Spleen (tissue), 13 donors: ENCODE measurements at regions of chr15 and their contacts with region 1.

Region 1: DNA sequence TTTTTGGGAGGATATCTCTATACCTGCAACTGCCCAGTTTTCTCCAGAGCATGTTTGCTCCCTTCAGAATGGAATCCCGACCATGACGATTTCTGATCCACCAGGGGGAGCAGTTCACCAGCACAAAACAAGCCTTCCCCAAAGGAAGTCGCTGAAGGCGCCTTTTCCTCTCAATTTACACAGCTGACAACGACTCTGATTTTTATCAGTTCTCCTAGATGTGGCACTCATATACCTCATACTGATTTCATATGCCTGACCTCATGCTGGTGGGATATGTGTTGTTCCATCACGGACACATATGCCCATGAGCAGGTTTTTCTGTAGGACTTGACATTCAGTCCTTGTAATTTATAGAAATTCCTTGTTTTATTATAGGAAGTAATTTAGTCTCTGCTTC is 1028.2 kb downstream of the MCTP2 start:
- DNase-seq: no peak
- H3K4me3 ChIP-seq: no peak overlapping the region
- H3K27ac ChIP-seq: peak overlapping the region in 7 of 8 donors; percentile 59 to 83 (median 71)
- H3K4me1 ChIP-seq: peaks cover 0 to 35% (median 27%) of the 10 kb centered on the region in 6 donors
- H3K27me3 ChIP-seq: peaks cover 0 to 21% (median 0%) of the 10 kb centered on the region in 7 donors
- CTCF ChIP-seq: peak; percentile 45 to 79 (median 68)
- POLR2A ChIP-seq: no peak

Region 2: DNA sequence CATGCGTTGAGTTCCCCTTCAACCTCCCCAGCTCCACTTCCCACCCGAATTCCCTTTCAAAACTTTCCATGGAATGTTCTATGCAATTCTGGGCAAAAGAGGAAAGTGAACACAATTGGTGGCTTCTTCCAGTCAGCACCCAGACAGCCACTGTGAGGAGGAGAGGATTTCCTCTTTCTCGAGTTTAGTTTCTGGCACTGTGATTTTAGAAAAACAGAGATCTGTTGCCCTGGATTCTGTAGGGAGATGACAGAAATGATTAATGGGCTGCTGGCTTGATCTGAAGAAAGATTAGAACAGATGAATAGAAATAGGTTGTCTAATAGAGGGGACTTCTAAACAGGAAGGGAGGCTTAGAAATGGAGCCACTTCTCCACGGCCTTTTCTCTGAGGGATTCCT is 856.2 kb before region 1 on chr15:
- intact Hi-C with region 1: loop called (anchors 10 kb)
- DNase-seq: no peak
- H3K4me3 ChIP-seq: no peak overlapping the region
- H3K27ac ChIP-seq: peak overlapping the region in 7 of 8 donors; percentile 0 to 81 (median 75)
- H3K4me1 ChIP-seq: peaks cover 0 to 51% (median 27%) of the 10 kb centered on the region in 6 donors
- H3K27me3 ChIP-seq: no peaks in the 10 kb centered on the region
- CTCF ChIP-seq: no peak
- POLR2A ChIP-seq: no peak

Region 3: DNA sequence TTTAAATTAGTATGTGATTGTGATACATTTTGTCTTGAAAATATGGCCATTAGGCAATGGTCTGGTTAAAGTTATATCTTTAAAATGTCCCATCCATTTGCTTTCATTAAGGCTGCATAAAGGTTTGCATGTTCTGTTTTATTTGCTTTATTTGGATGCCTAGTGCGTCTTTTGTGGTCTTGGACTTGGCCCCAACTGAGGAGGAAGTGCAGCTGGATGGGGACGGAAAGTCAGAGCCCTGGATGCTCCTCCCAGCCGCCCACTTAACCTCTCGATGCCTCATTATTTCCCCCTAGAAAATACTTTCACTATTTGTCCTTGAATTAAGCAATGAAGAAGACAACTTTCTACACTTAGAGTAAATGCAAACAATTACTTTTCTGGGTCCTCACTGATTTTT is 129.9 kb before region 1 on chr15:
- intact Hi-C with region 1: loop called (anchors 10 kb)
- DNase-seq: no peak
- H3K4me3 ChIP-seq: no peak overlapping the region
- H3K27ac ChIP-seq: peak overlapping the region; percentile 24 to 82 (median 68)
- H3K4me1 ChIP-seq: peaks cover 11 to 52% (median 28%) of the 10 kb centered on the region in 6 donors
- H3K27me3 ChIP-seq: no peaks in the 10 kb centered on the region
- CTCF ChIP-seq: no peak
- POLR2A ChIP-seq: no peak

Region 4: DNA sequence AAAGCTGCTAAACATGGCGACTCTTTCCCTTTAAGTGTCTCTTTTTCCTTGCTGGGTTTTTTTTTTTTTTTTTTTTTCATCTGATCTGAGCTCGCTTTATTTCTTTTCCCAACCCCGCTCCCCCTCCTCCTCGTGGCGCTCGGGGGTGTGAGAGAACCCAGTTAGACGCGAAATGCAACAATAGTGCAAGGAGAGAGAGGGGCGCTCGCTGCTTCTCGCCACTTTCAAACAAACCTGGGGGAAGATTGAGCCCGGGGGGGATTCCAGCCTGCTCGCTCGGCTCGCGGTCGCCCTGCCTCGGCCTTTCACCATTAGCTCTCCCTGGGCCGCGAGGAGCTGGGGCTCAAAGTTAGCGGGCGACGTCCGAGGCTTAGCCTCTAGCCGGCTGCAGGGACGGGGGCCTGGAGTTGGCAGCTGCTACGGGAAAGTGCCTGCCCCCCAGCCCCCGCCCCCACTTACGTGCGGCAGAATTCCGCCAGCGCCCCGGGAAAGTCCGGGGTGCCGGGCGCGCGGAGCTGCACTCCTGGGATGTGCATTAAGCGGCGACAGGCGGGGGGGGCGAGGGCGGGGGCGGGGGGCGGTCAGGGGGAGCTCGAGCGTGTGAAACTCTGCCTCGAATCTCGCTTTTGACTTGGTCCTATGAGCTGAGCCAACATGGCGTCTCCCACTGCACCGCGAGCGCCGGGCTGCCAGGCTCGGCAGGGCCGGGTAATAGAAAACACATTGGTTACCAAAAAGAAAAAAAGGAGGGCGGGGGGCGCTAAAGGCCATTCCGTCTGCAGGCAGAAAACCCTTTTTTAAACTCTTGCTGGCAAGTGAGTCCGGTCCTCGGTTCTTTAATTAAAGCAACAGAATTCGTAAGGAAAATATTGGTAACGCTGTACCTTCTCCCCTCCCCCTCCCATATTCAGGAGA is 1081.3 kb after region 1 on chr15:
- intact Hi-C with region 1: loop called (anchors 5 kb)
- DNase-seq: no peak
- H3K4me3 ChIP-seq: peak overlapping the region; percentile 21 to 80 (median 56)
- H3K27ac ChIP-seq: peak overlapping the region; percentile 75 to 93 (median 90)
- H3K4me1 ChIP-seq: peaks cover 0 to 35% (median 9%) of the 10 kb centered on the region in 6 donors
- H3K27me3 ChIP-seq: peaks cover 0 to 100% (median 51%) of the 10 kb centered on the region in 7 donors
- CTCF ChIP-seq: no peak
- POLR2A ChIP-seq: no peak